Activated CD4-positive, alpha-beta memory T cell treated with anti-CD3 and anti-CD28 coated beads, Interleukin-2, amount 10 ng/mL, durations not matched to agents 7 days and 5 days (primary cell): ENCODE measurements at regions of chr1 and their contacts with region 1.

Region 1: DNA sequence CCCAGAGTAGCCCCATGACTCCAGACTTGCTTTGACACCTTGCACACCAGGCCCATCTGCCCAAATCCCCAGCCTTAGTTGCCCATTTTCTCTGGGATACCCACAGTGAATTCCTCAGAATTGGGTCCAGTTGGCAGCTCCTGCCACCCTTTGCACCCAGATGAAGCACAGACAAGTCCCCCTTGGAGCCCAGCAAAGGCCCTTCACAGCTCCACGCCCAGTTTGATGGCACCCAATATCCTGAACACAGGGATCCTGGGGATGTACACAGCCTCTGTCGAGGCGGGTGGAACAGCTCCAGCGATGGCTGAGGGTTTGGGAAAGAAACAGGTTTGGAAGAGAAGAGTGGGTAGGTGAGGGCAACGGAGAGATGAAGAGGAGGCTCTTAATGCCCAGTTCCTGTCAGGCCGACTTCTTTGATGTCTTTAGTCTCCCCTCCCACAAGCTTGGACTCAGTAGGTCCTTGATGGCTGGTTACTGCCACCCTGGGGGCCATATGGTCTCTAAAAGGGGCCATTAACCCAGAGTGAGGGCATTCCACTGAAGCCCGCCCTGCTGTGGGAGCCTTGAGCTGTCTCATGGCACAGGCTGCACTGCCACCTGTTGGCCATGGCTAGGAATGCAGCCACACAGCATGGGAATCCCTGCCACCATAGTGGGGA is 21.7 kb downstream of the TMEM53 start:
- DNase-seq: peak; percentile 77
- H3K4me3 Mint-ChIP-seq: no peak overlapping the region
- H3K27ac Mint-ChIP-seq: no peak overlapping the region
- H3K4me1 Mint-ChIP-seq: no peaks in the 10 kb centered on the region
- H3K27me3 Mint-ChIP-seq: no peaks in the 10 kb centered on the region

Region 2: DNA sequence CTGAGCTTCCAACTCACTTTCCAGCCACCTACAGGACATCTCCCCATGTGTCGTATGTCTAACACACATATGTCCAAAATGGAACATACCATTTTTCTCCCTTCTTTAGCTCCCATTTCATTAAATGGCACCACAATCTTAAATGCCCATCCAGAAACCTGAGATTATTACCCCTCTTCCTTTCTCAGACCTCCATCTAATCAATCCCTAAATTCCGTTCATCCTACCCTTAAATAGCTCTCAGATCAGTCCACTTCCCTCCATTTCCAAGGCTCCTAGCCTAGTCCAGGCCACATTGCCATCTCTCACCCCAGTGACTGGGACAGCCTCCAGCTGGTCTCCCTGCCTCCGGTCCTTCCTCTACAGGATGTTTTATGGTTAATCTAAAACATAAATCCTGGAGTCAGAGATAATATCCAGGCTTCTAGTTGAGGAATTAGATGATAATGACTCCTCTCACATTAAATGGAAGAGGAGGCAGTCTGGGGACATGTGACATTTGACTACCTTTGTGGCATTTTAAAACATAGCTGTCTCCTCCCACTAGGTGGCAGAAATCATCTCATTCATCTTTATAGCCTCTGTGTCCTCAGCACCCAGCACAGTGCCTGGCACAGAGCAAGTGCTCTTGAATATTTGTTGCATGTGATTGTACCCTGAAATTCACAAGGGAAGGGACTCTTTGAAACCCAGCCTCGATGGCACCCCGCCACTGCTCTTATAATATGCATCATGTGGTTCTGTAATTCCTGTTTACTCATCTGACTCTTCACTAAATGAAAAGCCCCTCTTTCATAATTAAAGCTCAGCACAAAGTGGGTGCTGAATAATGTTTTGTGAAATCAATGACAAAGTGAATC is 80.6 kb before region 1 on chr1:
- CTCF ChIA-PET with region 1: interaction called, 42 read pairs
- POLR2A ChIA-PET with region 1: interaction called, 11 read pairs
- DNase-seq: no peak
- H3K4me3 Mint-ChIP-seq: no peak overlapping the region
- H3K27ac Mint-ChIP-seq: no peak overlapping the region
- H3K4me1 Mint-ChIP-seq: no peaks in the 10 kb centered on the region
- H3K27me3 Mint-ChIP-seq: peaks cover 36% of the 10 kb centered on the region

Region 3: DNA sequence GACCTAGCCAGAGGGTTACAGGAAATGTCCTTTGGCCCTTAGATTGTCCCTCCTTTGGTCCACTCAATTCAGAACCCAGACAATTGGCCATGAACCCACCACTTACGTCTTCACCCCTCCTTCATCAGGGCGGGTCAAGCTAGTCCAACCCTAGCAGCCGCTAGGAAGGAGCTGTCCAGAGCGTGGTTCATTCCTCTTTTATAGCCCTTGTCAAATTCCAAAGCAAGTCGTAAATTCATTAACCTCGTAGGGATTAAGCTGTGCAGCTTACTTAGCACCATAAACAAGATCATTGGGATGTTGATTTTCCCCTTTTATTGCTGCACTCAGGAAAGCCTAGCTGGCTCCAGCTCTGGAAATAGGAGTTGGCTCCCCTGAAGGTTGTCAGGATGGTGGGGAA is 68.4 kb before region 1 on chr1:
- CTCF ChIA-PET with region 1: no interaction called
- POLR2A ChIA-PET with region 1: no interaction called
- DNase-seq: no peak
- H3K4me3 Mint-ChIP-seq: no peak overlapping the region
- H3K27ac Mint-ChIP-seq: no peak overlapping the region
- H3K4me1 Mint-ChIP-seq: no peaks in the 10 kb centered on the region
- H3K27me3 Mint-ChIP-seq: peaks cover 9% of the 10 kb centered on the region

Region 4: GRCh38 chr1:44594871-44595746 is 57.5 kb before region 1 on chr1:
- CTCF ChIA-PET with region 1: interaction called, 10 read pairs
- POLR2A ChIA-PET with region 1: no interaction called
- DNase-seq: peak; percentile 79
- H3K4me3 Mint-ChIP-seq: no peak overlapping the region
- H3K27ac Mint-ChIP-seq: no peak overlapping the region
- H3K4me1 Mint-ChIP-seq: no peaks in the 10 kb centered on the region
- H3K27me3 Mint-ChIP-seq: peaks cover 3% of the 10 kb centered on the region

Region 5: GRCh38 chr1:44609412-44609767 is 43.2 kb before region 1 on chr1:
- CTCF ChIA-PET with region 1: interaction called, 34 read pairs
- POLR2A ChIA-PET with region 1: no interaction called
- DNase-seq: no peak
- H3K4me3 Mint-ChIP-seq: no peak overlapping the region
- H3K27ac Mint-ChIP-seq: no peak overlapping the region
- H3K4me1 Mint-ChIP-seq: no peaks in the 10 kb centered on the region
- H3K27me3 Mint-ChIP-seq: peaks cover 3% of the 10 kb centered on the region

Region 6: DNA sequence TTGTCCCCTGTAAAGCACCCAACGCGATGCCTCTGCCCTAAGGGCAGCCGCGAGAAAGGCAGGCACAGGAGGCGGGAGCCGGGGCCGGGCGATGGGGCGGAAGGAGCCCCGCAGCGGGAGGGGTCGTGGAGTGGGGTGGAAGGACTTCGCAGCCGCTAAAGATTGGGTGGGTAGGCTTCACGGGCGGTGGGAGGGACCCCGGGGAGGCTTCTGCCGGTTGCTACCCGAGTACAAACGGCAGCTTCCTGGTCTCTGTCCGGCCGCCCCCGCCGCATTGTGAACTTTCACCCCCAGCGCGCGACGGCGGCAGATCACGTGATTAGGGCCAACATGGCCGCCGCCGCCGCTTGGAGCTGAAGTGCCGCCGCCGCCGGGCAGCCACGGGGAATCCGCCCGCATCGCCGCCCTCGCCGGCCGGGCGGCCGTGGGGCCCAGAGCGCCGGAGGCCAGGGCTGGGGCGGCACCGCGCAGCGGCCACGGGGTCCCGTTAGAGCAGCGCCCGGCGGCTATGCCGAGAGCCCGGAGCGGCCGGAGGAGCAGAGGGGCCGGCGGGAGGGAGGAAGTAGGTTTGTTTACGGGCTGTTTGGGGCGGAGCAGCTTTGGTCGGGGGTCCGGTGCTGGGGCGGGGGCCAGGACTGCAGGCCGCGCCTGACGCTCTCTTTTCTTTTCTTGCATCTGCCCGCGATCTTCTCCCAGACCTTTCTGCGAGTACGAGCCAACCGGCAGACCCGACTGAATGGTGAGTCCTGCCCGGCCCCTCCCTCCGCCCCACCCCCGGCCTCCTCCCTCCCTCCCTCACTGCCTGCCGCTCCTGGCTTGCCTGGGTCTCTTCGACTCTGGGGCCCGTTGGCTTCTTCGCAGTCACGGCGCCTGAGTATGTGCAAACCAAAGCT is 20.7 kb before region 1 on chr1:
- CTCF ChIA-PET with region 1: interaction called, 65 read pairs
- POLR2A ChIA-PET with region 1: interaction called, 52 read pairs
- DNase-seq: peak; percentile 93
- H3K4me3 Mint-ChIP-seq: peak overlapping the region; percentile 90
- H3K27ac Mint-ChIP-seq: peak overlapping the region; percentile 93
- H3K4me1 Mint-ChIP-seq: peaks cover 40% of the 10 kb centered on the region
- H3K27me3 Mint-ChIP-seq: no peaks in the 10 kb centered on the region

Region 7: GRCh38 chr1:44640200-44640853 is 12.2 kb before region 1 on chr1:
- CTCF ChIA-PET with region 1: interaction called, 65 read pairs
- POLR2A ChIA-PET with region 1: interaction called, 12 read pairs
- DNase-seq: no peak
- H3K4me3 Mint-ChIP-seq: no peak overlapping the region
- H3K27ac Mint-ChIP-seq: no peak overlapping the region
- H3K4me1 Mint-ChIP-seq: peaks cover 1% of the 10 kb centered on the region
- H3K27me3 Mint-ChIP-seq: no peaks in the 10 kb centered on the region

Region 8: GRCh38 chr1:44674113-44675000 is 21.8 kb after region 1 on chr1 and contains the starts of genes ARMH1 and TMEM53:
- CTCF ChIA-PET with region 1: interaction called, 44 read pairs
- POLR2A ChIA-PET with region 1: no interaction called
- DNase-seq: peak; percentile 99
- H3K4me3 Mint-ChIP-seq: peak within 1 kb of the TSS; percentile 83
- H3K27ac Mint-ChIP-seq: peak within 1 kb of the TSS; percentile 79
- H3K4me1 Mint-ChIP-seq: peaks cover 32% of the 10 kb centered on the region
- H3K27me3 Mint-ChIP-seq: no peaks in the 10 kb centered on the region
- total RNA-seq, gene ARMH1: 20.8 to 21.2 TPM
- total RNA-seq, gene TMEM53: 4.3 to 5.6 TPM